Activated CD4-positive, alpha-beta memory T cell treated with anti-CD3 and anti-CD28 coated beads for 36 hours (primary cell): ENCODE measurements at regions of chr10 and their contacts with region 1.

Region 1: DNA sequence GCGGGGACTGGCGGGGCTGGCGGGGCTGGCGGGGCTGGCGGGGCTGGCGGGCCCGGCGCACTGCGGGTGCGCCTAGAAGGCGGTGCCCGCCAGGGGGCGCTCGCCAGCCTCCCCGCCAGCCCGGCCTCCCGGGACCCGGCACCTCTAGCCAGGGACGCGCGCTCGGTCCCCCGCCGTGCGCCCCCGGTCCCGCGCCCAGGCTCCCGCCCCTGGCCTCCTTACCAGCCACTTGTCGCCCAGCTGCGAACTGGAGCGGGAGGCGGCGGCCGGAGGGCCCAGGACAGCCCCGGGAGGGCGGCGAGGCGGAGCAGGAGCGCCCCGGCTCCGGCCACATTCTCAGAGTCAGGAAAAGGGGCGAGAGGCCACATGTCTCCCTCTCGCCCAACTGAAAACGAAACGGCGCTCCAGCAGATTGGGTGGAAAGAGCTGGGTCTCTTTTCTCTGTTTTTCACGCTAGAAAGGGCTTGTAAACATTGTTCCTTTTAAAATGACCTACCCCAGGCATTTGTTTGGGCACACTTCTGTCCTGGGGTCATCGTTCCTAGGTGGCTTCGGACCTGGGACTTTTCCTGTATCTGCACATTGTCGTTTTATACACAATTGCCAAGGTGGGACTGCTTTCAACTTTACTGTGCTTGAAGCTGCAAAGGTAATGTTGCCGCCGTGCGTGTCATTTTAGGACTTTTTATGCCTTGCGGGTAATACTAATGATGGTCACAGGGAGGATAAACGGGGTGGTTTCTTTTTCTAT is 378 bp upstream of the PRKCQ start:
- DNase-seq: peak; percentile 89
- H3K4me3 Mint-ChIP-seq: peak overlapping the region; percentile 90
- H3K27ac Mint-ChIP-seq: peak overlapping the region; percentile 96
- H3K4me1 Mint-ChIP-seq: peaks cover 55% of the 10 kb centered on the region
- H3K27me3 Mint-ChIP-seq: no peaks in the 10 kb centered on the region

Region 2: DNA sequence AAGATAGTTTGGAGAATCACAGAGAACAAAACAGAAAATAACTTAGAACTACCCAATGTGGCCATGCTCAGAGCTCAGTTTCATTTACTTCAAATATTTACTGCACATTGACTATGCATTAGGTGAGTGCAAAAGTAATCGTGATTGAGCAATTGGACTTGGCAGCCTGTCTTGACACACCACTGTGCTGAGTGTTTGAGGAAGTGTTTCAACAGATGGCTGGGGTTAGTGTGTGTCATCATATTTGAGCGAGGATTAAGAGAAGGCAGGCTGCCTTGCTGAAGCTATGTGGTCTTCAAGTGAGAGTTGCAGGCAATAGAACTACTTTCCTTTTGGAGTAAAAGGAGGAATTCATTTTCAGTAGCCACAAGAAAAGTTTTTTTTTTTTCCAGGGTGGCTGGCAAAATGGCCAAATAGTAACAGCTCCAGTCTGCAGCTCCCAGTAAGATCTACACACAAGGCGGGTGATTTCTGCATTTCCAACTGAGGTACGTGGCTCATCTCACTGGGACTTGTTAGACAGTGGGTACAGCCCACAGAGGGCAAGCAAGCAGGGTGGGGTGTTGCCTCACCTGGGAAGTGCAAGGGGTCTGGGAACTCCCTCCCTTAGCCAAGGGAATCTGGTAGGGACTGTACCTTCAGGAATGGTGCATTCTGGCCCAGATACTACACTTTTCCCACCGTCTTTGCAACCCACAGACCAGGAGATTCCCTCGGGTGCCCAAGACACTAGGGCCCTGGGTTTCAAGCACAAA is 1346.2 kb before region 1 on chr10:
- CTCF ChIA-PET with region 1: no interaction called
- POLR2A ChIA-PET with region 1: no interaction called
- intact Hi-C with region 1: no loop called
- DNase-seq: no peak
- H3K4me3 Mint-ChIP-seq: no peak overlapping the region
- H3K27ac Mint-ChIP-seq: no peak overlapping the region
- H3K4me1 Mint-ChIP-seq: no peaks in the 10 kb centered on the region
- H3K27me3 Mint-ChIP-seq: no peaks in the 10 kb centered on the region

Region 3: DNA sequence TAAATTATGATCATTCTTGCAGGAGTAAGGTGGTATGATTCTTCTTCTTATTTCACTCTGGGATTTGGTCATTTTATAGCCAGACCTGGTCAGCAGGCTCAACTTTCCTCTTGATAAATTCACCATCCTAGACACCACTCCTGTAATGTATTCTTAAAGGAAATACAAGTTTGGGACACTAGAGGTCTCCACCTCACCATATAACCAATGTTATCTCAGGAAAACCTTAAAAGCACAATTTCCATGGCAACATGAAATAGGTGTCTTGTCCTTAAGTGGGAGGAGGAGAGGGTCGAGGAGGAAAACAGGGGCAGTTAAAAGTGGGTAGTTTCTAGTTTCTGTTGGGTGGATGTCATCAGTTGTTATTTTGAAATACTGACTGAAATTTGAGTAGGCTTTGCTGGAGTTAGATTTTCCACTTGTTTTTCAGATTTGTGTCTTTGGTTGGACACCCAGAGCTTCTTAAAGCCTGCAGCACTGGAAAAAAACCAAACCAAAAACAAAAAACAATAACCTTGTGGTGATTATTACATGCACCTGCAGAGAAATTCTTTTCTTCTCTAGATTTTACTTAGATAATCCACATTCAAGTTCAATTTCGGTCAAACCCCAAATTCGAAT is 163.5 kb before region 1 on chr10:
- CTCF ChIA-PET with region 1: interaction called, 7 read pairs
- POLR2A ChIA-PET with region 1: no interaction called
- intact Hi-C with region 1: loop called (anchors 1 kb)
- DNase-seq: no peak
- H3K4me3 Mint-ChIP-seq: no peak overlapping the region
- H3K27ac Mint-ChIP-seq: no peak overlapping the region
- H3K4me1 Mint-ChIP-seq: no peaks in the 10 kb centered on the region
- H3K27me3 Mint-ChIP-seq: no peaks in the 10 kb centered on the region

Region 4: DNA sequence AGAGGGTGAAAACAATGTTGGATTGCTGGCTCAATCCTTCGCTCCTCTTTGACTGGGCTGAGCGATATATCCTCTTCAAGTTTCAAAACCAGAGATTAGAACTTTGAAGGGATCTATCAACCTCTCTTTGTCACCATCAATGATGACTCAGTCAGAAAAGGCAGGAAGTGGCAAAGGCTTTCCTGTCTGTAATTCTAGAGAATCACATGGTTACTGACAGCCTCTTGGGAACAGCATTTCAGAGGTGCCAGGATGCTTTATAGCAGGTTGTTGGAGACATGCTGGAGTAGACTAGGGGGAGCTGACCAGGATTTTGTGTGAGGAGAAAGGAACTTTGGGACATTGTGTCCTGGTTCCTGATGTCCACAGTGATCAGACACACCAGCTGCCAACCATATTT is 81.7 kb before region 1 on chr10:
- CTCF ChIA-PET with region 1: interaction called, 8 read pairs
- POLR2A ChIA-PET with region 1: interaction called, 6 read pairs
- intact Hi-C with region 1: loop called (anchors 2 kb)
- DNase-seq: peak; percentile 55
- H3K4me3 Mint-ChIP-seq: peak overlapping the region; percentile 36
- H3K27ac Mint-ChIP-seq: peak overlapping the region; percentile 93
- H3K4me1 Mint-ChIP-seq: peaks cover 53% of the 10 kb centered on the region
- H3K27me3 Mint-ChIP-seq: no peaks in the 10 kb centered on the region

Region 5: GRCh38 chr10:6513476-6513875 is 67.0 kb before region 1 on chr10:
- CTCF ChIA-PET with region 1: no interaction called
- POLR2A ChIA-PET with region 1: no interaction called
- intact Hi-C with region 1: no loop called
- DNase-seq: peak; percentile 51
- H3K4me3 Mint-ChIP-seq: no peak overlapping the region
- H3K27ac Mint-ChIP-seq: peak overlapping the region; percentile 81
- H3K4me1 Mint-ChIP-seq: peaks cover 74% of the 10 kb centered on the region
- H3K27me3 Mint-ChIP-seq: no peaks in the 10 kb centered on the region

Region 6: GRCh38 chr10:6563075-6563474 is 17.4 kb before region 1 on chr10:
- CTCF ChIA-PET with region 1: interaction called, 23 read pairs
- POLR2A ChIA-PET with region 1: interaction called, 12 read pairs
- intact Hi-C with region 1: loop called (anchors 1 kb)
- DNase-seq: peak; percentile 86
- H3K4me3 Mint-ChIP-seq: peak overlapping the region; percentile 72
- H3K27ac Mint-ChIP-seq: peak overlapping the region; percentile 91
- H3K4me1 Mint-ChIP-seq: peaks cover 88% of the 10 kb centered on the region
- H3K27me3 Mint-ChIP-seq: no peaks in the 10 kb centered on the region

Region 7: GRCh38 chr10:6607778-6608177 is 27.3 kb after region 1 on chr10:
- CTCF ChIA-PET with region 1: interaction called, 9 read pairs
- POLR2A ChIA-PET with region 1: interaction called, 15 read pairs
- intact Hi-C with region 1: no loop called
- DNase-seq: no peak
- H3K4me3 Mint-ChIP-seq: peak overlapping the region; percentile 58
- H3K27ac Mint-ChIP-seq: peak overlapping the region; percentile 90
- H3K4me1 Mint-ChIP-seq: peaks cover 62% of the 10 kb centered on the region
- H3K27me3 Mint-ChIP-seq: no peaks in the 10 kb centered on the region

Region 8: GRCh38 chr10:6667679-6668270 is 87.3 kb after region 1 on chr10:
- CTCF ChIA-PET with region 1: interaction called, 63 read pairs
- POLR2A ChIA-PET with region 1: interaction called, 11 read pairs
- intact Hi-C with region 1: loop called (anchors 1 kb)
- DNase-seq: peak; percentile 68
- H3K4me3 Mint-ChIP-seq: no peak overlapping the region
- H3K27ac Mint-ChIP-seq: peak overlapping the region; percentile 6
- H3K4me1 Mint-ChIP-seq: peaks cover 23% of the 10 kb centered on the region
- H3K27me3 Mint-ChIP-seq: no peaks in the 10 kb centered on the region

Region 9: DNA sequence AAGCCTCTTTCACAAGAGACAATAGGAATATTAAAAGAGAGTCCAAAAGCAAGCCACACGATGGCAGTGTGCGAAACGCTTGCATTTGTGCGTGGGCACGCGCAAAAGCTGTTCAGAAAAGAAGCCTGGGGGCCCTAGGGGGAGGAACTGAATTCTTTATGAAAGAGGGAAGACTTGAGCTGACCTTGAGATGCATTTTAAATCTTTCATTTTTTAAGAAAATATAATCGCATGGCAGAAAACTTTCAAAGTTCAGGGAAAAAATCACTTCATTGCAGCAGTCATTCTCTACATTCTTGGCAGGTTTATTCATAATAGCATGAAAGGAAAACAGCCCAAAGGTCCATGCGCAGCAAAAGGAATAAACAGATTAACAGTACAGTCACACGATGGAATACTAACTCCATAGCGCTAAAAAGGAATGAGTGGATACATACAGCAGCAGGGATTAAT is 206.2 kb after region 1 on chr10:
- CTCF ChIA-PET with region 1: no interaction called
- POLR2A ChIA-PET with region 1: no interaction called
- intact Hi-C with region 1: no loop called
- DNase-seq: no peak
- H3K4me3 Mint-ChIP-seq: no peak overlapping the region
- H3K27ac Mint-ChIP-seq: no peak overlapping the region
- H3K4me1 Mint-ChIP-seq: no peaks in the 10 kb centered on the region
- H3K27me3 Mint-ChIP-seq: peaks cover 18% of the 10 kb centered on the region

Region 10: GRCh38 chr10:7484456-7485243 is 904.2 kb after region 1 on chr10:
- CTCF ChIA-PET with region 1: no interaction called
- POLR2A ChIA-PET with region 1: no interaction called
- intact Hi-C with region 1: no loop called
- DNase-seq: peak; percentile 69
- H3K4me3 Mint-ChIP-seq: peak overlapping the region; percentile 56
- H3K27ac Mint-ChIP-seq: peak overlapping the region; percentile 73
- H3K4me1 Mint-ChIP-seq: peaks cover 62% of the 10 kb centered on the region
- H3K27me3 Mint-ChIP-seq: no peaks in the 10 kb centered on the region